ENCODE measurements at regions of chr1 and their contacts with region 1.

Region 1: DNA sequence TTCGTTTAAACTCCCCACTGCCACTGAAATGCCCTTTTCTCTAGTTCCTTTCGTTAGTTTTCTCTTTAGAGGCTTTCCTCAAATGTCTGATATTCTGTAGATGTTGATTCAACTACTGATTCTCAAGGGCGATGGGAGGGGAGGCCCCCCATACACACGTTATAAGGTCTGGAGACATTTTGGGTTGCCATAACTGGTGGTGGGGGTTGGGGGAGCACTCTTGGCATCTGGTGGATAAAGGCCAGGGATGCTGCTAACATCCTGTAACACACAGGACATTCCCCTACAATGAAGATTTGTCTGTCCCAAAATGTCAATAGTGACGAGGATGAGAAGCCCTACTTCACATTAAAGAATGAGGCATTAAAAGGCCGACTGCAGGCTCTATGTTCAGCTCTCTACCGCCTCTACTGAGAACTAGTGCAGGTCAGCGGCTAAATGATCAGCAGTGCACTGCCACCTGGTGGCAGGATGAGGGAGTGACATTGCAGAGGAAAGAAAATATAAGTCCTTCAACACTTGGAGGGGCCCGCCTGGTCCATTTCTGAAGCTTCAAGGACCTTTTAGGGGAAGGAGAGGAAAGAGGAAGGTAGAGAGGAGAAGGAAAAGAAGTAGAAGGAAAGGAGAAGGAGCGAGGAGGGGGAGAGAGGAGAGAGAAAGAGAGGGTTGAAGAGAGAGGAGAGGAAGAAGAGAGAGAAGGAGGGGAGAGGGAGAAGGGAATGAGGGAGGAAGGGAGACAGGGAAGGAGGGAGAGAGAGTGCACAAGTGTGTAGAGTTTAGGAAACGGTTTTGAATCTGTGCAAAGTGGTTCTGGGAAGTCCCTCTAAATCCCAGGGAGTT is 29.4 kb downstream of the ALG14 start:
- DNase-seq: peak; percentile 74 to 77
- H3K4me3 ChIP-seq: no peak overlapping the region
- H3K27ac ChIP-seq: no peak overlapping the region
- H3K4me1 ChIP-seq: peaks cover 32% of the 10 kb centered on the region
- H3K27me3 ChIP-seq: no peaks in the 10 kb centered on the region
- CTCF ChIP-seq: peak; percentile 100

Region 2: GRCh38 chr1:94025383-94026340 is 1017.7 kb before region 1 on chr1:
- CTCF ChIA-PET with region 1: no interaction called
- POLR2A ChIA-PET with region 1: no interaction called
- intact Hi-C with region 1: loop called (anchors 10 kb)
- DNase-seq: peak; percentile 54 to 77
- H3K4me3 ChIP-seq: no peak overlapping the region
- H3K27ac ChIP-seq: no peak overlapping the region
- H3K4me1 ChIP-seq: peaks cover 49% of the 10 kb centered on the region
- H3K27me3 ChIP-seq: no peaks in the 10 kb centered on the region
- CTCF ChIP-seq: peak; percentile 91

Region 3: GRCh38 chr1:94481473-94481933 is 561.9 kb before region 1 on chr1:
- CTCF ChIA-PET with region 1: interaction called, 5 read pairs
- POLR2A ChIA-PET with region 1: no interaction called
- intact Hi-C with region 1: loop called (anchors 1 kb)
- DNase-seq: peak; percentile 56 to 81
- H3K4me3 ChIP-seq: no peak overlapping the region
- H3K27ac ChIP-seq: no peak overlapping the region
- H3K4me1 ChIP-seq: no peaks in the 10 kb centered on the region
- H3K27me3 ChIP-seq: no peaks in the 10 kb centered on the region
- CTCF ChIP-seq: peak; percentile 96

Region 4: DNA sequence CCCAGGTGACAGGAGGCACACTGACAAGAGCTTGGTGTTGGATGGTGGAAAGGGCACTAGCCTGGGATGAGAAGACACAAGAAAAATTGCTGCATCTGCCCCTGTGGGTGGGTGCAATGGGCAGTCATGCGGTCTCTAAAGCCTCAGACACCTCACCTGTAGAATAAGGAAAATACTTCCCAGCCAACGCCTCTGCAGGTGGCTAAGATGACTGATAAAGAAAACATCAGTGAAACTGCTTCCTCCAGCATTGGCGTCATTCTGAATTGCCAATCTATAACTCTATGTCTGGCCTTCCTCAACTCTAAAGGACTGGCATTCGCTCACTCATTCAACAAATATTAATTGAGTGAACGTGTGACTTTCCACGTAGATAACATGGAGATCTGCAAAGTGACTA is 401.4 kb before region 1 on chr1:
- CTCF ChIA-PET with region 1: no interaction called
- POLR2A ChIA-PET with region 1: no interaction called
- intact Hi-C with region 1: loop called (anchors 5 kb)
- DNase-seq: peak; percentile 78 to 100
- H3K4me3 ChIP-seq: peak overlapping the region; percentile 18; the same call in 1 of the 2 replicates
- H3K27ac ChIP-seq: peak overlapping the region; percentile 97
- H3K4me1 ChIP-seq: peaks cover 85% of the 10 kb centered on the region
- H3K27me3 ChIP-seq: no peaks in the 10 kb centered on the region
- CTCF ChIP-seq: no peak

Region 5: GRCh38 chr1:94854458-94855306 is 188.7 kb before region 1 on chr1:
- CTCF ChIA-PET with region 1: interaction called, 51 read pairs
- POLR2A ChIA-PET with region 1: no interaction called
- intact Hi-C with region 1: loop called (anchors 1 kb)
- DNase-seq: peak; percentile 86 to 99
- H3K4me3 ChIP-seq: peak overlapping the region; percentile 38; the same call in 1 of the 2 replicates
- H3K27ac ChIP-seq: peak overlapping the region; percentile 83
- H3K4me1 ChIP-seq: peaks cover 65% of the 10 kb centered on the region
- H3K27me3 ChIP-seq: no peaks in the 10 kb centered on the region
- CTCF ChIP-seq: peak; percentile 99

Region 6: DNA sequence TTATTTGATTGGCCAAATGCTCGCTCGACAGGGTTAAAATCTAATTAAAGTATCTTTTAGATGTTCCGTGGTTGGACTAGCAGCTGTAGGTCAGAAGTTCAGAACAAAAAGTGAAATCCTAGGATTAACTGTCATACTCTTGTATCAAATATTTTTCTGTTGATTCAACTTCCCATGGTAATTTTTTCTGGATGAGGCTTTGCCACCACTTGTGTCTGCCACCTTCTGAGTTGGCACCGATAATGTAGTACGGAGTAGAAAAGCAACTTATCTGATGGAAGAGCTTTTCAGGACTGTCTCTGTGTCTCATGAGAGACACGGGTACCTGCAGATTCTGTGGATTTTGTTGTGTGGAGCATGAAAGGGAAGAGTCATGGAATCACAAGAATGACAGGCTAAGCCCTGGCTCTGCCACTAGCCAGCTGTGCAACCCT is 71.9 kb before region 1 on chr1:
- CTCF ChIA-PET with region 1: no interaction called
- POLR2A ChIA-PET with region 1: no interaction called
- intact Hi-C with region 1: loop called (anchors 2 kb)
- DNase-seq: no peak
- H3K4me3 ChIP-seq: no peak overlapping the region
- H3K27ac ChIP-seq: no peak overlapping the region
- H3K4me1 ChIP-seq: 0 out of 2 replicates have a peak, but pooled peaks cover 4% of the 10 kb centered on the region
- H3K27me3 ChIP-seq: no peaks in the 10 kb centered on the region
- CTCF ChIP-seq: no peak